Right lobe of liver (tissue), 6 donors: ENCODE measurements at regions of chr17 and their contacts with region 1.

Region 1: GRCh38 chr17:10618202-10618635 is 38.9 kb downstream of the MYH3 start:
- DNase-seq: peak; percentile 55 to 68 (median 67)
- ATAC-seq: peak; percentile 86 to 92 (median 88)
- H3K4me3 ChIP-seq: no peak overlapping the region
- H3K27ac ChIP-seq: no peak overlapping the region
- H3K4me1 ChIP-seq: no peaks in the 10 kb centered on the region
- H3K27me3 ChIP-seq: no peaks in the 10 kb centered on the region
- CTCF ChIP-seq: peak; percentile 50 to 87 (median 82)
- POLR2A ChIP-seq: no peak

Region 2: GRCh38 chr17:10327640-10328039 is 290.6 kb before region 1 on chr17:
- intact Hi-C with region 1: loop called in 1 of 2 experiments (anchors 10 kb)
- DNase-seq: peak; percentile 63 to 69 (median 67)
- ATAC-seq: peak; percentile 74 to 89 (median 82)
- H3K4me3 ChIP-seq: no peak overlapping the region
- H3K27ac ChIP-seq: no peak overlapping the region
- H3K4me1 ChIP-seq: no peaks in the 10 kb centered on the region
- H3K27me3 ChIP-seq: no peaks in the 10 kb centered on the region
- CTCF ChIP-seq: peak; percentile 75 to 94 (median 91)
- POLR2A ChIP-seq: no peak

Region 3: DNA sequence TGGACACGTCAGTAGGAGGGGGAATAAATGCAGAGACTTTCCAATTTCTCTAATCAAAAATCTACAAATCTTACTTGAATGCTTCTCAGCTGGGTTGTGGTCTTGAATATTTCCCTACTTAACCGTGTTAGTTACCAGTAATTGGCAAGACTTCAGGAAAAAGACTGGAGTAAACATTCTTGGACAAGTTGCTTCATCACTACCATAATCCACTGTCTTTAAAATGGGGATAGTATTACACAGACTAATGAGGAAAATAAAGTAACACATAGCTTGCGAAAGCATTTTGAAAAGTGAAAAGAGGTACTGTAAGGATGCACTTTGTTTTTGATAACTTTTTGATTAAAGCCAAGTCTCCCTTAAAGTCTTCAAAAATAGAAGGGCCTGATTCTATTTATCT is 118.3 kb before region 1 on chr17:
- intact Hi-C with region 1: no loop called
- DNase-seq: no peak
- ATAC-seq: no peak
- H3K4me3 ChIP-seq: no peak overlapping the region
- H3K27ac ChIP-seq: no peak overlapping the region
- H3K4me1 ChIP-seq: no peaks in the 10 kb centered on the region
- H3K27me3 ChIP-seq: no peaks in the 10 kb centered on the region
- CTCF ChIP-seq: no peak
- POLR2A ChIP-seq: no peak

Region 4: GRCh38 chr17:10518271-10519037 is 99.8 kb before region 1 on chr17 and contains the start of gene MYH1:
- intact Hi-C with region 1: no loop called
- DNase-seq: no peak
- ATAC-seq: no peak
- H3K4me3 ChIP-seq: no peak within 1 kb of the TSS
- H3K27ac ChIP-seq: no peak within 1 kb of the TSS
- H3K4me1 ChIP-seq: no peaks in the 10 kb centered on the region
- H3K27me3 ChIP-seq: no peaks in the 10 kb centered on the region
- CTCF ChIP-seq: no peak
- POLR2A ChIP-seq: no peak
- total RNA-seq, gene MYH1: 0.23 to 2.3 (median 0.31) TPM in 3 of 6 experiments, not detected in the others